ENCODE measurements at regions of chr9 and their contacts with region 1.

Region 1: DNA sequence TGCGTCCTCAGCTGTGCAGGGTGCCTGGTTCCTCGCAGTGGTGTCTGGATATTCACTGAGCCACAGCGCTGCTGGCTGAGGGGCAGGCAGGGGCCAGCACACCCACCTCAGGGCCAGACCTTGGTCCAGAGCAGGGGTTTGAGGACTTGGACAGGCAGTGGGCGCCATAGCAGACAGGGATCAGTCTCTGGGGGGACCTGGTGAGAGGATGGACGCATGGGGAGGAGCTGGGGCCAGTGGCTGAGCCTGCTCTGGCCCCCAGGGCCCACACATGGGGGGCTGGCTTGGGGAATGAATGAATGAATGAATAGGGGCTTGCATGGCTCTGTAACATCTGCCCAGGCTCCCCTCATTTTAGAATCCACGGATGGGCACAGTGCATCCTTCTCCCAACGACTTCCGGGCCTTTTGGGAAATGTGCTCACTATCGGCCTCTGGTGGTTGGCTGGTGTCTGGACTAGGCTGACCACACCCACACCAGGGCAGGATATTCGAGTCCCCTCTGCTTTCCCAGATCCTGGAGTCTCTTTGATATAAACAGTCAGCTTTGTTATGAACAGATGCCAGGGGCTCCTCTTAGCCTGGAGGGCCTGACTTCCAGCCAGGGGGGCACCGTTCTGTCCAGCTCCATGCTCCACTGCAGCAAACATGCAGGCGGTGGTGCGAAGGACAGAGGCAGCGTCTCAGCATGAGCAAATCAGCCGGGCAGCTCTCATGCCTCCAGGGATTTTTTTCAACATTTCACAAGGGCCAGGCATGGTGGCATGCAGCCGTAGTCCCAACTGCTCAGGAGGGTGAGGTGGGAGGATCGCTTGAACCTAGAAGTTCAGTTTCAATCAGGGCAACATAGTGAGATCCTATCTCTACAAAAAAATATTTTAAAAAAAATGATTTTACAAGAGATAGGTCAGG is 62.6 kb downstream of the NEK6 start:
- DNase-seq: peak; percentile 61 to 78
- H3K4me3 ChIP-seq: no peak overlapping the region
- H3K27ac ChIP-seq: no peak overlapping the region
- H3K4me1 ChIP-seq: no peaks in the 10 kb centered on the region
- H3K27me3 ChIP-seq: no peaks in the 10 kb centered on the region
- CTCF ChIP-seq: peak; percentile 72 to 82 (median 79)
- POLR2A ChIP-seq: no peak

Region 2: GRCh38 chr9:124126571-124127289 is 193.6 kb before region 1 on chr9:
- intact Hi-C with region 1: loop called (anchors 10 kb)
- DNase-seq: peak; percentile 58 to 67
- H3K4me3 ChIP-seq: no peak overlapping the region
- H3K27ac ChIP-seq: no peak overlapping the region
- H3K4me1 ChIP-seq: no peaks in the 10 kb centered on the region
- H3K27me3 ChIP-seq: no peaks in the 10 kb centered on the region
- CTCF ChIP-seq: peak; percentile 87 to 92 (median 89)
- POLR2A ChIP-seq: no peak

Region 3: GRCh38 chr9:124450241-124450924 is 130.1 kb after region 1 on chr9 and contains the start of gene ADGRD2:
- intact Hi-C with region 1: no loop called
- DNase-seq: no peak
- H3K4me3 ChIP-seq: no peak within 1 kb of the TSS
- H3K27ac ChIP-seq: no peak within 1 kb of the TSS
- H3K4me1 ChIP-seq: no peaks in the 10 kb centered on the region
- H3K27me3 ChIP-seq: peaks cover 0 to 19% of the 10 kb centered on the region in 2 donors
- CTCF ChIP-seq: no peak
- POLR2A ChIP-seq: no peak
- total RNA-seq, gene ADGRD2: 0.76 TPM in 1 of 4 donors, not detected in the others

Measured in uterus (tissue), 4 donors.